ENCODE measurements at regions of chr3 and their contacts with region 1.

Region 1: DNA sequence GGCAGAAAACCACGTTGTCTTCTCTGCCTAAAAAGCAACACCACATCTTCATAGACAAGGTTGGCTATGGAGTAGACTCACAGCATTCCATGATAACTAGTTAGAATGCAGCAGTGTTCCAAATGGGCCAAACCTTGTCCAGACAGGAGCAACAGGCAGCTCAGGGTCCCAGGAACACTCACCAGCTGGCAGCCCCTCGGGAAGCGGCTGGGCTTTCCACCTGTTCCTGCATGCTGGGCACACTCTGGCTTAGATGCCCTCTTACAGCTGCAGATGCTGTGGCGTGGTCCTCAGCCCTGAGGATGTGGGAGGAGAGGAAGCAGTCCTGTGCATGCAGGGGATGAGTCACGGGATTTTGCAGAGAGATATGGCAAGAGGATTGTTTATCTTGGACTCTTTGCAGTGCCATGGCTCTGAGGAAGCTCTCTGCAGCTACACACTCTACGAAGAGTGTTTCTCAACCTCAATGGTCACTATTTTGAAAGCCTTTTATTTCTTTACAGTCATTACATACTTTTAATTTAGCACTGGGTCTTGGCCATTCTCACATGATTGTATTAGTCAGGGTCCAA is 11.3 kb downstream of the NRROS start:
- DNase-seq: peak; percentile 88 to 95 (median 93)
- H3K4me3 ChIP-seq: no peak overlapping the region
- H3K4me3 Mint-ChIP-seq: peak overlapping the region in 1 of 2 donors; percentile 54
- H3K27ac ChIP-seq: peak overlapping the region; percentile 88 to 90
- H3K27ac Mint-ChIP-seq: peak overlapping the region; percentile 93 to 97 (median 95)
- H3K4me1 ChIP-seq: peaks cover 72 to 76% of the 10 kb centered on the region in 2 donors
- H3K4me1 Mint-ChIP-seq: peaks cover 75% of the 10 kb centered on the region
- H3K27me3 ChIP-seq: no peaks in the 10 kb centered on the region
- H3K27me3 Mint-ChIP-seq: peaks cover 0 to 3% (median 0%) of the 10 kb centered on the region in 3 donors
- CTCF ChIP-seq: no peak

Region 2: GRCh38 chr3:196609343-196609775 is 41.5 kb before region 1 on chr3:
- intact Hi-C with region 1: loop called (anchors 5 kb)
- DNase-seq: peak; percentile 86 to 91 (median 90)
- H3K4me3 ChIP-seq: peak overlapping the region in 1 of 3 experiments; percentile 61
- H3K4me3 Mint-ChIP-seq: peak overlapping the region; percentile 43 to 80
- H3K27ac ChIP-seq: peak overlapping the region in 1 of 2 donors; percentile 68
- H3K27ac Mint-ChIP-seq: peak overlapping the region; percentile 83 to 94 (median 93)
- H3K4me1 ChIP-seq: peaks cover 26 to 29% of the 10 kb centered on the region in 2 donors
- H3K4me1 Mint-ChIP-seq: peaks cover 35% of the 10 kb centered on the region
- H3K27me3 ChIP-seq: no peaks in the 10 kb centered on the region
- H3K27me3 Mint-ChIP-seq: peaks cover 2% of the 10 kb centered on the region in 3 donors
- CTCF ChIP-seq: peak; percentile 92